Ascending aorta (tissue), 2 donors: ENCODE measurements at regions of chr11 and their contacts with region 1.

Region 1: DNA sequence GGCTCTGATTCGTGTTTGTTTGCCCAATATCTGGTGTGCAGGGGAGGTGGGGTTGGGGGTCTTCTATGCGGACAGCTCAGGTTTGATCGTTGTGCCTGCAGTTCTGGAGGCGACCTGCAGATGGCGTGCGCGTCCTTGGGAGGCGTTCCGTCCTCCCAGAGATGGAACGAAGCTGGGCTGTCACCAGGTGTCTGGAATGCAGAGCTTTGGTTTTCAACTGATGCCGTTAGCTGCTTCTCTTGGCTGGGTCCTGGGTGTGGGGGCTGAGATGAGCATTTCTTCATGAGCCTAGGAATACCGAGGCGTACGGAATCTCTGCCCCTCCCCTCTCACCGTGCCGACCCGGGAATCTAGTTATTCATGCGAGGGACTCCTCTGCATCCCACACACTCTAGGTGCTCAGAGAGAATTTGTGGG is 98.6 kb downstream of the CEP164 start:
- DNase-seq: no peak
- H3K4me3 ChIP-seq: no peak overlapping the region
- H3K27ac ChIP-seq: no peak overlapping the region
- H3K4me1 ChIP-seq: no peaks in the 10 kb centered on the region
- H3K27me3 ChIP-seq: no peaks in the 10 kb centered on the region
- CTCF ChIP-seq: peak; percentile 66 to 88 (median 83)

Region 2: DNA sequence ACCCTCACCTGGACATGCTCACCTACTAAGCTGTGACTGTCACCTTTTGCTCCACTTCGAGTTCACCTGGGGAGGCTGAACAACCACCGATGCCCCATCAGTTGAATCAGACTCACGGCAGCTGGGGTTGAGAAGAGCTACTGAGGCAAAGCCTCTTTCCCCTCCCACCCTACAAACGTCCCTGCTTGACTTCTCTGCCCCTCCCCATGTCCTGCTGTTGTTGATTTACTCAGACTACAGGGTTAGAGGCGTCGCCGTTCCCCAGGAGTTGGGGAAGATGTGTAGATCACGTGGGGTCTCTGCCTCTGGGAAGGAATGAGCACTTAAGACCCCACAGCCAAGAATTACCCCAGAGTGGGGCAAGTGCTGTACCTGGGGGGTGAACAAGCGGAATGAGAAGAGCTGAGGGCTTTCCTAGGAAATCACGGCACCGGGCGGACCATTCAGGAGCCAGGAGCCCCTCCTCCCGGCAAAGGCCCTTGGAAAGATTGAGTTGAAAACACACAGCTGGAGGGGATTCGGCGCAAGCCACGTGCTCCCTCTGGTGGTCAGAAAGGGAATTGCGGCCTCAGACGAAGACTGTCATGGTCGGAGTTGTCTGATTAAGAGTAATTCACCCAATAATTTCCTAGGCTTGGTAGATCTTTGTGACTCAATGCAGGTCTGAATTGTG is 391.2 kb after region 1 on chr11:
- intact Hi-C with region 1: loop called (anchors 5 kb)
- DNase-seq: peak in 1 of 2 donors; percentile 89
- H3K4me3 ChIP-seq: no peak overlapping the region
- H3K27ac ChIP-seq: peak overlapping the region; percentile 20 to 26
- H3K4me1 ChIP-seq: no peaks in the 10 kb centered on the region
- H3K27me3 ChIP-seq: no peaks in the 10 kb centered on the region
- CTCF ChIP-seq: peak; percentile 93 to 99 (median 96)